Right cardiac atrium (tissue), 5 donors: ENCODE measurements at regions of chr10 and their contacts with region 1.

Region 1: GRCh38 chr10:93288654-93289634 is 193.2 kb downstream of the MYOF start:
- DNase-seq: peak; percentile 60 to 85 (median 74)
- ATAC-seq: peak; percentile 72 to 84
- H3K4me3 ChIP-seq: no peak overlapping the region
- H3K27ac ChIP-seq: no peak overlapping the region
- H3K4me1 ChIP-seq: no peaks in the 10 kb centered on the region
- H3K27me3 ChIP-seq: no peaks in the 10 kb centered on the region

Region 2: GRCh38 chr10:93080350-93081046 is 208.4 kb before region 1 on chr10:
- intact Hi-C with region 1: loop called in 2 of 4 experiments (anchors 2 to 10 kb)
- DNase-seq: peak in 2 of 3 donors; percentile 57 to 77
- ATAC-seq: peak; percentile 66 to 75
- H3K4me3 ChIP-seq: no peak overlapping the region
- H3K27ac ChIP-seq: no peak overlapping the region
- H3K4me1 ChIP-seq: no peaks in the 10 kb centered on the region
- H3K27me3 ChIP-seq: no peaks in the 10 kb centered on the region

Region 3: DNA sequence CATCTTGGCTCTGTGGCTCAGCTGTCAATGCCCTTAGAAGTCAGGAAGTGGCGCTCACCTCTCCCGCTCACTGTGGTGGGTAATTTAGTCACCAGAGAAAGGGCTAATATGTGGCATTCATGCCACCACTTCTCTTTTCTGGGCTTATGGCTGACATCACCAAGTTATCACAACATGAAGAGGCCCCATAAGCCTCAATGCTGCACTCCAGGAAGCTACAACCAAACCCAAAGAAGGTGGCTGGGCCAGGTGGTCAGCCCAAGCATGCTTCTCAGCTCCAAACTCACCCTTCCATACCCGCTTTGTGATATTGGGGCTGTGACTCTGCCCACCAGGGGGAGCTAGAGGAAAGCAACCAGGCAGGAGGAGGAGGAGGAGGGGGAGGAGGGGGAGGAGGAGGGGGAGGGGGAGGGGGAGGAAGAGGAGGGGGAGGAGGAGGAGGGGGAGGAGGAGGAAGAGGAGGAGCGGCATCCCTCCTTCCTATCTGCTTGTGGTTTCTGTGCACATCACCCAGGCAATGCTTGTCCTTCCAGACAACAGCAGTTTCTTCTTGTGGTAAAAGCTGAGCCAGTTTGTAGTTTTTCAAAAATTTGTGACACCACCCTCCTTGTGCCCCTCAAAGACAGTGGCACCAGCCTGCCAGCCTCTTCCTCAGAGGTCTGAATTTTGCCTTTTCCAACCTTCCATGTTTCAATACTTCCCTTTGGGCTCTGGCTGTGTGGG is 173.1 kb before region 1 on chr10:
- intact Hi-C with region 1: loop called (anchors 2 to 10 kb)
- DNase-seq: peak; percentile 63 to 86 (median 82)
- ATAC-seq: peak; percentile 47 to 57
- H3K4me3 ChIP-seq: no peak overlapping the region
- H3K27ac ChIP-seq: no peak overlapping the region
- H3K4me1 ChIP-seq: no peaks in the 10 kb centered on the region
- H3K27me3 ChIP-seq: no peaks in the 10 kb centered on the region

Region 4: GRCh38 chr10:93126484-93127052 is 162.4 kb before region 1 on chr10:
- intact Hi-C with region 1: loop called in 1 of 4 experiments (anchors 10 kb)
- DNase-seq: no peak
- ATAC-seq: no peak
- H3K4me3 ChIP-seq: no peak overlapping the region
- H3K27ac ChIP-seq: no peak overlapping the region
- H3K4me1 ChIP-seq: no peaks in the 10 kb centered on the region
- H3K27me3 ChIP-seq: no peaks in the 10 kb centered on the region

Region 5: GRCh38 chr10:93190372-93190771 is 98.6 kb before region 1 on chr10:
- intact Hi-C with region 1: no loop called
- DNase-seq: no peak
- ATAC-seq: no peak
- H3K4me3 ChIP-seq: no peak overlapping the region
- H3K27ac ChIP-seq: no peak overlapping the region
- H3K4me1 ChIP-seq: no peaks in the 10 kb centered on the region
- H3K27me3 ChIP-seq: peaks cover 2% of the 10 kb centered on the region